CD4-positive, alpha-beta memory T cell (primary cell): ENCODE measurements at regions of chr12 and their contacts with region 1.

Region 1: GRCh38 chr12:56041552-56042429 is at the start of gene RPS26:
- DNase-seq: peak; percentile 95 to 98 (median 96)
- H3K4me3 ChIP-seq: peak within 1 kb of the TSS; percentile 94 to 97
- H3K4me3 Mint-ChIP-seq: peak within 1 kb of the TSS; percentile 98 to 100 (median 99)
- H3K27ac ChIP-seq: peak within 1 kb of the TSS; percentile 87
- H3K27ac Mint-ChIP-seq: peak within 1 kb of the TSS; percentile 96 to 100 (median 99)
- H3K4me1 ChIP-seq: peaks cover 23% of the 10 kb centered on the region
- H3K4me1 Mint-ChIP-seq: peaks cover 15 to 45% (median 23%) of the 10 kb centered on the region in 4 donors
- H3K27me3 ChIP-seq: no peaks in the 10 kb centered on the region
- H3K27me3 Mint-ChIP-seq: no peaks in the 10 kb centered on the region
- total RNA-seq, gene RPS26: 55.6 to 55.8 TPM

Region 2: GRCh38 chr12:56007564-56008559 is 33.9 kb before region 1 on chr12:
- CTCF ChIA-PET with region 1: interaction called, 5 read pairs
- POLR2A ChIA-PET with region 1: interaction called, 4 read pairs
- intact Hi-C with region 1: loop called (anchors 1 kb)
- DNase-seq: peak; percentile 59 to 67 (median 62)
- H3K4me3 ChIP-seq: peak overlapping the region; percentile 38 to 61
- H3K4me3 Mint-ChIP-seq: peak overlapping the region; percentile 89 to 95 (median 92)
- H3K27ac ChIP-seq: peak overlapping the region; percentile 49
- H3K27ac Mint-ChIP-seq: peak overlapping the region; percentile 83 to 97 (median 92)
- H3K4me1 ChIP-seq: peaks cover 10% of the 10 kb centered on the region
- H3K4me1 Mint-ChIP-seq: peaks cover 10 to 28% (median 22%) of the 10 kb centered on the region in 4 donors
- H3K27me3 ChIP-seq: no peaks in the 10 kb centered on the region
- H3K27me3 Mint-ChIP-seq: no peaks in the 10 kb centered on the region

Region 3: DNA sequence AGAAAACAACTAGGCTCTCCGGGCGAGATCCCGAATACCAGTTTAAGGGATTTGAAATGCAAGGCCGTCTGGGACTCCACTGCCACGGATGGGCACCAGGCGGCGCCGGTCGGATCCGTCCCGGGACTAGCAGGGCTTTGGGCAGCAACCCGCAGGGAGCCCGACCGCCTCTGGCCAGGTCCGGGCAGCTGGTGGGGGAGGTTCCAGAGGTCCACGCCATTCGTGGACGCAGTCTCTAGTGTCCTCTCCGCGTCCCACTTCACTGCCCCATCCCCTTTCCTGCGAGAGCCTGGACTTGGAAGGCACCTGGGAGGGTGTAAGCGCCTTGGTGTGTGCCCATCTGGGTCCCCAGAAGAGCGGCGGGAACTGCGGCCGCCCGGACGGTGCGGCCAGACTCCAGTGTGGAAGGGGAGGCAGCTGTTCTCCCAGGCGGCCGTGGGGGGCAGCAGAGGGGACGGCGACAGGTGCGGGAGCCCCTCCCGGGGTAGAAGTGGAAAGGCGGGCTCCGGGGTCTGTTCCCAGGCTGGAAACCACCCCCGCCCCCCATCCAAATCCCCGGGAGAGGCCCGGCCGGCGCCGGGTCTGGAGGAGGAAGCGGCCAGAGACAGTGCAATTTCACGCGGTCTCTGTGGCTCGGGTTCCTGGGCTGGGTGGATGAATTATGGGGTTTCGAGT is 37.3 kb after region 1 on chr12:
- CTCF ChIA-PET with region 1: interaction called, 3 read pairs
- POLR2A ChIA-PET with region 1: interaction called, 6 read pairs
- intact Hi-C with region 1: loop called (anchors 2 kb)
- DNase-seq: peak; percentile 27 to 65 (median 40)
- H3K4me3 ChIP-seq: peak overlapping the region; percentile 52 to 86
- H3K4me3 Mint-ChIP-seq: peak overlapping the region; percentile 84 to 91 (median 88)
- H3K27ac ChIP-seq: peak overlapping the region; percentile 2
- H3K27ac Mint-ChIP-seq: peak overlapping the region in 6 of 7 donors; percentile 36 to 91 (median 72)
- H3K4me1 ChIP-seq: peaks cover 20% of the 10 kb centered on the region
- H3K4me1 Mint-ChIP-seq: peaks cover 0 to 25% (median 5%) of the 10 kb centered on the region in 4 donors
- H3K27me3 ChIP-seq: peaks cover 6% of the 10 kb centered on the region
- H3K27me3 Mint-ChIP-seq: peaks cover 0 to 3% of the 10 kb centered on the region in 2 donors

Region 4: DNA sequence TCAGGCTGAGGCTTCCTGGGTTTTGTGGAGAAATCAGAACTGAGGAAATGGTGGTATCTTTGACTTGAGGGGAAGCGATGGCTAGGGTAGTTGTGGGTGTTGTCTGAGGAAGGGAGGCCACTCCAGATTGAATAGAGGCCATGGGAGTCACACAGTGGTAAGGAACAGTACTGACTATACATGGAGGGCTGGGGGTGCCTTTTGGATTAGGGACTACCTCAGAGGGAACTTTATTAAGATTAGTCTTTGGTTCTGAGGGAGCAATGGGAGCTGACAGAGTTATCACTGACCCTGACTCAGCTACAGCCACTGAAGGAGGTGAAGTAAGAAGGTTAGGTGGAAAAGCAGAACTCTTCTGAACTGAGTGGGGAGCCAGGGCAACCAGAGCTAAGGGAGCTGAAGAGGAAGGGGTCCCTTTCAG is 679.0 kb after region 1 on chr12:
- CTCF ChIA-PET with region 1: no interaction called
- POLR2A ChIA-PET with region 1: no interaction called
- intact Hi-C with region 1: no loop called
- DNase-seq: no peak
- H3K4me3 ChIP-seq: no peak overlapping the region
- H3K4me3 Mint-ChIP-seq: peak overlapping the region in 7 of 8 donors; percentile 23 to 99 (median 59)
- H3K27ac ChIP-seq: peak overlapping the region; percentile 90
- H3K27ac Mint-ChIP-seq: peak overlapping the region; percentile 65 to 98 (median 92)
- H3K4me1 ChIP-seq: peaks cover 84% of the 10 kb centered on the region
- H3K4me1 Mint-ChIP-seq: peaks cover 58 to 86% (median 72%) of the 10 kb centered on the region in 4 donors
- H3K27me3 ChIP-seq: no peaks in the 10 kb centered on the region
- H3K27me3 Mint-ChIP-seq: no peaks in the 10 kb centered on the region